Left cardiac atrium (tissue), 4 donors: ENCODE measurements at regions of chr7 and their contacts with region 1.

Region 1: DNA sequence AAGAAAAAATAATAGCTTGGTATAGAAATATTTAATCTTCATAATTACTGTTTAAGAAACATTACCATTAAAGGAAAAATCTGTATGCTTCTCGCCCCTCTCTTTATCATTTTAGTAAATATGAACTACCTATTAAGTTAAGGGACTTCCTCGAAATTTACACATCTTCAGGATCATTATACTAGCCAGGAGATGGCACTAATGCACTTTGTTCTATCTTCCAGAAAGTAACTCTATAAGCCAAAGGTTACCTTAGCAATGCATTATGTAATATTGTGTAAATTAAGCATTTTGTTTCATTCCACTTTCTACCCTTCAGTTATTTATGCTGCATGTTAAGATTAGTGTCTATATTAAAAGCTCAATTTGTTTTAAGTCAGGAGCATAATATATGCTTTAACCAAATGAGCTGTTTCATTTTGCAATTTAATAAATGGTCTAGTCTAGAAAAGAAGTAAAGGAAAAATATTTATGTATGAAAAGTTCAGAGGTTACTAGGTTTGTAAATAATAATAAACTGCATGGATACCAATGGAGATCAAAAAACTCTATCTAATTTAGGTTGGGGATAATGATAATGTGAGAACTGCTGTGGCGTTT is 128.4 kb downstream of the ANKRD7 start:
- DNase-seq: no peak
- ATAC-seq: no peak

Region 2: DNA sequence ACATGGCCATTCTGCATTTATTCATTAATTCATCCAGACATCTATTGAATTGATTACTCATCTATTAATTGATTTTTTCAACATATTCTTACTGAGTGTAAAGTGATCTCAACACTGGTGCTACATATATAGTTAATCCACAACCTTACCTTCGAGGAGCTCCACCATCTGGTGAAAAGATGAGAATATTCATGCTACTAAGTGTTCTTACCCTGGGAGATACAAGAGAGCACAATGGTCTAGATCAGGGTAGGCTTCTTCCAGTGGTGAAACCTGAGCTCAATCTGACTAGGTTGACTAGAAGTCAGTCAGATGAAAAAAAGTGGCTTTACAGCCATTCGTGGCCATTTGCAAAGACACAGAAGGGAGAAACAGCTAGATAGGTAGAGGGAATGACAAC is 378.9 kb after region 1 on chr7:
- intact Hi-C with region 1: loop called in 1 of 2 experiments (anchors 5 kb)
- DNase-seq: no peak
- ATAC-seq: no peak

Region 3: DNA sequence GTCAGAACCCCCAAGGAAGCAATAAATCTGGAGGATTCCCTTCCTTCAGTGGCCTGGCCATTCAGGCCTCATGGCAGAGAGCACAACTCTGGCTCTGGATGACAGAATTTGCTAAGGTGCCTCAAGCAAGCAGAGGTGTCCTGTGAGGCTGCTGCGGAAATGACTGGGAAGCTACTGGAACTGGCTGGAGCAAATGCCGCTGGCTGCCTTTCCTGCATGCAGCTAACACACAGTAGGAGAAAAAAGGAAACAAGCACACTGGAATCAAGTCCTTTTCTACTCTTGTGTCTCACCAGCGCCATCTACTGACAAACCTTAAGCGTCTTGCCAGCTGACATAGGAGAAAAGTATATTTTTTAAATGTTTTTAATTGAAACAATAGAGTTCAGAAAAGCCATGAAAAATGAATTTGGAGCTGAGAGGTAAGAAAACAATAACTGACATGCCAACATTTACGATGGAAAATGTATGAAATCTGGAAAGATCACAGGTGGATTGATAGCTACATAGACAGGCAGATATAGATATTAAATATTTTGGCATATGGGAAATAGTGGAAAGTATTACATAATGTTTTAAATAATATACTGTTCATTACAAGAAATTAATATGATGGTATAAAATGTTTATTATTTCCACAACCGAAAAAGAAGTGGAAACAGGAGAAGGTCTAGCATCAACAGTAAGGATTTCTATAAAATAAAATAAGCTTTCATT is 823.1 kb after region 1 on chr7:
- intact Hi-C with region 1: loop called in 1 of 2 experiments (anchors 2 kb)
- DNase-seq: no peak
- ATAC-seq: no peak